WTC11 (cell line): ENCODE measurements at regions of chr5 and their contacts with region 1.

Region 1: DNA sequence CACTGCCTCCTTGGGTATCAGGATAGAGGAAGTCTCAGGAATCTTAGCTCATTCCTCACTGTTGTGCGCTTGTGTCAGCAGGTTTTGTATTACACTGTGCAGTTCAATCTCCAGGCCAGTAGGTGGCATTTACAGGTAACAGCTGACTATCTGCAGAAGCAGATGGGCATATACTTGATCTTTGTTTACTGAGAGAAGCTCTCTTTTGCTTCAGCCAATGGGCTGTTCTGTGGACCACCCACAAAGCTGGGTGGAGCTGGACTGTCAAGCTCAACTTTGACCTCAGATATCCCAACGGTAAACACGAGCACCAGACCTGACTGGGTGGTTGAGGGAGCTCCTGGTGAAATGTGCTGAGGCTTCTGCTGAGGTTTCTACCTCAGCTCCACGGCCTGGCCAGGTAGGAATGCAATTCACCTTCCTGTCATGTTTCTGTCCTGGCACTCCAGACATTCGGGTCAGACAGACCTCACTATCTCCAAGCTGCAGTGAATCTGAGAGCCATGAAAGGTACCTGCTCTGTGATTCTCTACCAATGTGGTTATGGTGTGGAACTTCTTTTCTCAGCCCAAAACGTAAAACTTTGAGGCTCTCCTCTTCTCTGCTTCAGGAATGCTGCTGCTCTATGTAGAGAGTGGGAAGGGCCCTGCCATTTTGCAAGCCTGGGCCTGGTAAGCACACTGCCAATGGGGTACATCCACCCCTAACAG is 167.9 kb upstream of the ACTBL2 start:
- DNase-seq: peak; percentile 49
- ATAC-seq: peak; percentile 96
- H3K4me3 Mint-ChIP-seq: no peak overlapping the region
- H3K27ac Mint-ChIP-seq: peak overlapping the region; percentile 82; the same call in 1 of the 2 replicates
- H3K4me1 Mint-ChIP-seq: peaks cover 19% of the 10 kb centered on the region
- H3K27me3 Mint-ChIP-seq: no peaks in the 10 kb centered on the region
- CTCF ChIP-seq: peak; percentile 60

Region 2: GRCh38 chr5:57193757-57194413 is 456.6 kb before region 1 on chr5:
- CTCF ChIA-PET with region 1: no interaction called
- POLR2A ChIA-PET with region 1: no interaction called
- DNase-seq: no peak
- ATAC-seq: no peak
- H3K4me3 Mint-ChIP-seq: no peak overlapping the region
- H3K27ac Mint-ChIP-seq: peak overlapping the region; percentile 6; the same call in 1 of the 2 replicates
- H3K4me1 Mint-ChIP-seq: peaks cover 26% of the 10 kb centered on the region
- H3K27me3 Mint-ChIP-seq: no peaks in the 10 kb centered on the region
- CTCF ChIP-seq: no peak

Region 3: DNA sequence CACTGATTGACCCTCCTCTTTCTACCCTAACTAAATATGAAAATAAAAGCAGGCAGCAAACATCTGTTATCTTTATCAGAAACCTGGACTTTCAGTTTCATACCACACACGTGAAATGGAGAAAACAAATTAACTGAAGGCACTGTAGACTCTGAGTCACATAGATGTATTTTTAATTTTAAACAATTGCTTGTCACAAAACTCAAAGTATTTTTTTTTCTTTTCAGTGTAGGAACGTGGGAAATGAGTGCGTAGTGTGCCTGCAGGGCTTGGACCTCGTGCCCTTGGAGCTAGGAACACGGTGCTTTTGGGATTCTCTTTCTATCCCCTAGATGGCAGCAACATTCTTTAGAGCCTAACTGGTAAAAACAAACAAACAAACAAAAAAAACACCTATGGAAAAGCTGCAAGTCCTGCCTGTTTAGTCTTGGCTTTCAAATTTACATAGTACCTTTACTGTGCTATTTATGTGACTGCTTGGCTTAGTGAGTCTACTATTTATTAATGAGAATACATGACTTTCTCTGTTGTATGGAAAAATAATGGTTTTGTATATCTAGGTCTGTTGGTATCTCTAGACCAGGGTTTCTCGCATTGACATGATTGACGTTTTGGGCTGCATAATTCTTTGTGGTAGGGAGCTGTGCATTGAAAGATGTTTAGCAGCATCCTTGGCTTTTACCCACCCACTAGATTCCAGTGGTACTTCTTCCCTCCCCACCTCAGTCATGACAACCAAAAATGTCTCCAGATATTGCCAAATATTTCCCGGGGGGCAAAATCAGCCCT is 151.1 kb before region 1 on chr5:
- CTCF ChIA-PET with region 1: interaction called, 16 read pairs
- POLR2A ChIA-PET with region 1: no interaction called
- DNase-seq: peak; percentile 29
- ATAC-seq: peak; percentile 89
- H3K4me3 Mint-ChIP-seq: no peak overlapping the region
- H3K27ac Mint-ChIP-seq: no peak overlapping the region
- H3K4me1 Mint-ChIP-seq: peaks cover 17% of the 10 kb centered on the region
- H3K27me3 Mint-ChIP-seq: peaks cover 3% of the 10 kb centered on the region; the same call in 1 of the 2 replicates
- CTCF ChIP-seq: peak; percentile 33; the same call in 1 of the 2 replicates

Region 4: GRCh38 chr5:57635146-57635777 is 15.3 kb before region 1 on chr5:
- CTCF ChIA-PET with region 1: interaction called, 12 read pairs
- POLR2A ChIA-PET with region 1: no interaction called
- DNase-seq: no peak
- ATAC-seq: no peak
- H3K4me3 Mint-ChIP-seq: no peak overlapping the region
- H3K27ac Mint-ChIP-seq: no peak overlapping the region
- H3K4me1 Mint-ChIP-seq: 0 out of 2 replicates have a peak, but pooled peaks cover 4% of the 10 kb centered on the region
- H3K27me3 Mint-ChIP-seq: no peaks in the 10 kb centered on the region; the same call in 1 of the 2 replicates
- CTCF ChIP-seq: no peak

Region 5: DNA sequence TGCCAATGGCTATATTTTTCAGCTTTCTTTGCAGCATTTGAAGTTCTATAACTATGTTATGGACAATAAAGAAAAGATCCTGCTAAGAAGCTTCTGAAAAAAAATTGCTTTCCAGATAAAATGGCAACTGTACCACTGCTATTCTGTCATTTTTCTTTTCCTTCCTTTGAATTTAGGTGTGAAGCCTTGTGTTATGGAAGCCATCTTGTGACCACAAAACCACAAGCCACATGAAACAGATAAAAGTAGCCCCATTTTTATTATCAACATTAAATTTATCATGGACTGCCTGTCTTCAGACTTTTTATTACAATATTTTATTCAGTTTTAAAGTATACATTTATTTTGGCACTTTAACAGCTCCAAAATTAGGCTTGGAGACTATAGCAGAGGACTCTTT is 122.0 kb after region 1 on chr5:
- CTCF ChIA-PET with region 1: interaction called, 28 read pairs
- POLR2A ChIA-PET with region 1: no interaction called
- DNase-seq: no peak
- ATAC-seq: no peak
- H3K4me3 Mint-ChIP-seq: no peak overlapping the region
- H3K27ac Mint-ChIP-seq: no peak overlapping the region
- H3K4me1 Mint-ChIP-seq: peaks cover 8% of the 10 kb centered on the region
- H3K27me3 Mint-ChIP-seq: no peaks in the 10 kb centered on the region
- CTCF ChIP-seq: no peak

Region 6: DNA sequence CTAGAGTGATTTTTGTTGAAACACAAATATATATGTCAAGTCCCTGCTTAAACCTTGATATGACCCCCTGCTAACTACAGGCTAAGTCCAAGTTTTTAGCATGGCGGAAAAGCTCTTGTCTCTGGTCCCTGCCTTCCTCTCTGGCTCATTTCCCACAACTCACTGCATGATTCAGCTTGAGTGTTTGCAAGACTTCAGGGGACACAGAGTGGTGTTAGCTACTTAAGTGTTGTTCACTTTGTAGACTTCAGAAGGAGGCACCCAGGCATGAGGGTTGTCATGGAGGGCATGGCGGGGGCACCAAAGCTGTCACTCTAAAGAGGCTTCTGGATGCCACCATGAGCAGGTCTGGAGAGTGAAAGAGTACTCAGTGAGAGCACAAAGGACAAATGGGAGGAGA is 194.5 kb after region 1 on chr5:
- CTCF ChIA-PET with region 1: no interaction called
- POLR2A ChIA-PET with region 1: no interaction called
- DNase-seq: no peak
- ATAC-seq: no peak
- H3K4me3 Mint-ChIP-seq: no peak overlapping the region
- H3K27ac Mint-ChIP-seq: no peak overlapping the region; the same call in 1 of the 2 replicates
- H3K4me1 Mint-ChIP-seq: peaks cover 37% of the 10 kb centered on the region
- H3K27me3 Mint-ChIP-seq: no peaks in the 10 kb centered on the region
- CTCF ChIP-seq: no peak

Region 7: DNA sequence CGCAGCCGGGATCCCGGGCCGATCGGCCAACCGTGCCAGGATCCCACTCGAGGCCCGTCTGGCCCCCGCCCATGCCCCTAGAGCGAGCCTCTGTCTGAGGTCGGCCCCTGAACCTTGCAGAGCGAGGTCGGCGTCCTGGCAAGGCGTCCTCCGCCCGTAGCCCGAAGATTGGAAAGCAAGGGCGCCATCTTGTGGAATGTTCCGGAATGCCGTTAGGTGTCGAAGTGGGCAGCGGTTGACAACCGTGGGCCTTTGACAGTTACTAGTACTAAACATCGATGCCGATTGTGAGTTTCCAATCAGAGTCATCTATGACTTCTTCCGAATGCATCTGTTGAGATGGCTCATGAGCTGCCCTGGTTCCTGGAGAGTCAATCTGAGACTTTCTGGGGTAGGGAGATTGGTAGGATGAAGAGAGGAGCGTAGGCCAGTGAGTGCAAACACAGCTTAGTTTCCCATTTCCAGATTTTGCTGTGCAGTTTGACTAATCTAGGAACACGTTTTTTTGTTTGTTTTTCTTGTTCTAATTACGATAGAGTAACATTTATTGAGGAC is 810.3 kb after region 1 on chr5:
- CTCF ChIA-PET with region 1: interaction called, 13 read pairs
- POLR2A ChIA-PET with region 1: no interaction called
- DNase-seq: peak; percentile 92
- ATAC-seq: peak; percentile 73
- H3K4me3 Mint-ChIP-seq: peak overlapping the region; percentile 49
- H3K27ac Mint-ChIP-seq: peak overlapping the region; percentile 24; the same call in 1 of the 2 replicates
- H3K4me1 Mint-ChIP-seq: peaks cover 34% of the 10 kb centered on the region
- H3K27me3 Mint-ChIP-seq: peaks cover 2% of the 10 kb centered on the region
- CTCF ChIP-seq: peak; percentile 59